ENCODE measurements at regions of chr10 and their contacts with region 1.

Region 1: GRCh38 chr10:128011175-128011979 is 104.5 kb downstream of the PTPRE start:
- DNase-seq: peak; percentile 90
- H3K4me3 Mint-ChIP-seq: no peak overlapping the region
- H3K27ac Mint-ChIP-seq: no peak overlapping the region
- H3K4me1 Mint-ChIP-seq: peaks cover 7% of the 10 kb centered on the region
- H3K27me3 Mint-ChIP-seq: peaks cover 7% of the 10 kb centered on the region

Region 2: DNA sequence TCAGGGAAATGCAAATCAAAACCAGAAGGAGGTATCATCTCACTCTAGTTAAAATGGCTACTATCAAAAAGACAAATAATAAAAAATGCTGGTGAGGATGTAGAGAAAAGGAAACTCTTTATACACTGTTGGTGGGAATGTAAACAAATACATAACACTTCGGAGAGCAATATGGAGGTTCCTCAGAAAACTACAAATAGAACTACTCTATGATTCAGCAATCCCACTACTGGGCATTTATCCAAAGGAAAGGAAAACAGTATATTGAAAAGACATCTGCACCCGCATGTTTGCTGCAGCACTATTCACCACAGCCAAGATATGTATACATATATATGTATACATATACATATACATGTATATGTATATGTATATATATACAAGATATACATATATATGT is 1435.0 kb before region 1 on chr10:
- CTCF ChIA-PET with region 1: no interaction called
- intact Hi-C with region 1: no loop called
- DNase-seq: no peak
- H3K4me3 Mint-ChIP-seq: no peak overlapping the region
- H3K27ac Mint-ChIP-seq: no peak overlapping the region
- H3K4me1 Mint-ChIP-seq: no peaks in the 10 kb centered on the region
- H3K27me3 Mint-ChIP-seq: no peaks in the 10 kb centered on the region

Region 3: GRCh38 chr10:126979311-126979710 is 1032.1 kb before region 1 on chr10:
- CTCF ChIA-PET with region 1: no interaction called
- intact Hi-C with region 1: no loop called
- DNase-seq: no peak
- H3K4me3 Mint-ChIP-seq: no peak overlapping the region
- H3K27ac Mint-ChIP-seq: no peak overlapping the region
- H3K4me1 Mint-ChIP-seq: no peaks in the 10 kb centered on the region
- H3K27me3 Mint-ChIP-seq: peaks cover 3% of the 10 kb centered on the region

Region 4: GRCh38 chr10:127906548-127907377 is 104.6 kb before region 1 on chr10 and contains the start of gene PTPRE:
- CTCF ChIA-PET with region 1: interaction called, 178 read pairs
- intact Hi-C with region 1: loop called (anchors 1 kb)
- DNase-seq: peak; percentile 68
- H3K4me3 Mint-ChIP-seq: peak within 1 kb of the TSS; percentile 36
- H3K27ac Mint-ChIP-seq: no peak within 1 kb of the TSS
- H3K4me1 Mint-ChIP-seq: no peaks in the 10 kb centered on the region
- H3K27me3 Mint-ChIP-seq: peaks cover 20% of the 10 kb centered on the region
- total RNA-seq, gene PTPRE: 13.4 to 16.4 TPM

Region 5: GRCh38 chr10:127990846-127991542 is 20.4 kb before region 1 on chr10:
- CTCF ChIA-PET with region 1: interaction called, 15 read pairs
- intact Hi-C with region 1: loop called (anchors 1 kb)
- DNase-seq: peak; percentile 87
- H3K4me3 Mint-ChIP-seq: peak overlapping the region; percentile 32
- H3K27ac Mint-ChIP-seq: peak overlapping the region; percentile 88
- H3K4me1 Mint-ChIP-seq: peaks cover 57% of the 10 kb centered on the region
- H3K27me3 Mint-ChIP-seq: no peaks in the 10 kb centered on the region

Region 6: GRCh38 chr10:128047351-128047750 is 36.0 kb after region 1 on chr10:
- CTCF ChIA-PET with region 1: interaction called, 10 read pairs
- intact Hi-C with region 1: loop called (anchors 1 kb)
- DNase-seq: peak; percentile 92
- H3K4me3 Mint-ChIP-seq: peak overlapping the region; percentile 84
- H3K27ac Mint-ChIP-seq: peak overlapping the region; percentile 95
- H3K4me1 Mint-ChIP-seq: peaks cover 44% of the 10 kb centered on the region
- H3K27me3 Mint-ChIP-seq: no peaks in the 10 kb centered on the region

Region 7: DNA sequence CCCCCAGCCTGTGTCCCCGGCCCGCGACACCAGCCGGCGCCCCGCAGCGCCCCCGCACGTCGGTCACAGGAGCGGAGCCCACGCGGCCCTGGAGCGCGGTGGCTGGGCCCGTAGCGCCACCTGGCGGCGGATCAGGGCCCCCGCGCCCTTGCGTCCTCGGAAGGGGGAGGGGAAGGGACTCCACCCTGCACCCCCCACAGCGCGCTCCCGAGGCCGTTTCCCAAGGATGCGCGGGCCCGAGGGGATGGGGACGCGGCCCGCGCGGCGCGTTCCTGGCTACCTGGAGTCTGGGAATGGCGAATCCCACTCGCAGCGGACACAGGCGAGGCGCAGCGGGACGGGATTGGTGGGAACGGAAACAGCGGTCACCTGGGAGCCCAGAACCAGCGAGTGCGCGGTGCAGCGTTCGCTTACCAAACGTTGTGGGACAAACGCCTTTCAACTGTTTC is 138.7 kb after region 1 on chr10:
- CTCF ChIA-PET with region 1: no interaction called
- intact Hi-C with region 1: loop called (anchors 1 kb)
- DNase-seq: peak; percentile 77
- H3K4me3 Mint-ChIP-seq: peak overlapping the region; percentile 65
- H3K27ac Mint-ChIP-seq: no peak overlapping the region
- H3K4me1 Mint-ChIP-seq: peaks cover 18% of the 10 kb centered on the region
- H3K27me3 Mint-ChIP-seq: no peaks in the 10 kb centered on the region